K562 (cell line): ENCODE measurements at regions of chr4 and their contacts with region 1.

Region 1: GRCh38 chr4:158209825-158210807 is at the start of gene TMEM144:
- DNase-seq: peak; percentile 58 to 92 (median 74)
- ATAC-seq: peak; percentile 99
- H3K4me3 ChIP-seq: peak within 1 kb of the TSS; percentile 40
- H3K27ac ChIP-seq: peak within 1 kb of the TSS; percentile 86
- H3K4me1 ChIP-seq: peaks cover 4 to 8% of the 10 kb centered on the region in 2 experiments; a peak in 3 of 5 replicates
- H3K27me3 ChIP-seq: no peaks in the 10 kb centered on the region
- CTCF ChIP-seq: peak in 2 of 3 experiments; percentile 17 to 36; a peak in 2 of 6 replicates
- EP300 ChIP-seq: no peak
- POLR2A ChIP-seq: peak; percentile 84
- RAD21 ChIP-seq: 0 out of 4 replicates have a peak, but pooled peaks of 1 of the 2 experiments have one; percentile 12
- polyA plus RNA-seq, gene TMEM144: 5.9 to 6.0 TPM

Region 2: DNA sequence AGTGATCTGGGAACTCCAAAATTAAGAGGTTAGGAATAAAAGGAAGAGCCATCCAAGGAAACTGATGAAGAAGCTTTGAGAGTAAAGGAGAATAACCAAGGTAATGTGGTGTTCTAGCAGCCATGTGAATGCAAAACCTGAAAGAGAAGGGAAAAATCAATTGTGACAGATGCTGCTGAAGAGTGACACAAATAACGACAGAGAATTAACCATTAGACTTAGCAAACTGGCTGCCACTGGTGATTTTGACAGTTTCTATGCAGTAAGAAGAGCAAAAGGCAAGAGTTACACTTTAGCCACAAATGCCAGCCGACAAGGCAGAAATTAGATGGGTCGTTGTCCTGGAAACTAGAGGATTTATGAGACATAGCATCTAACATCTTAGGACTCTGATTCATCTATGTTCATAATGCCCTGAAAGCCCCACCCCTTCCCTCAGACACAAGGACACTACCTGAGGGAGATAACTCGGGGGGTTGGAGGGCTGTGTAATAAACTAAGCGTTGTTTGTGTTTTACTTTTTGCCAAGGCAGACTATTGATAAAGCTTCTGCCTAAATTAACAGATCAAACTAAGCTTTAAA is 12.8 kb before region 1 on chr4:
- CTCF ChIA-PET with region 1: no interaction called
- POLR2A ChIA-PET with region 1: no interaction called
- in situ Hi-C with region 1: no loop called
- intact Hi-C with region 1: no loop called
- DNase-seq: no peak
- ATAC-seq: no peak
- H3K4me3 ChIP-seq: no peak overlapping the region
- H3K27ac ChIP-seq: no peak overlapping the region
- H3K4me1 ChIP-seq: no peaks in the 10 kb centered on the region
- H3K27me3 ChIP-seq: no peaks in the 10 kb centered on the region
- CTCF ChIP-seq: no peak
- EP300 ChIP-seq: no peak
- POLR2A ChIP-seq: no peak
- RAD21 ChIP-seq: no peak

Region 3: DNA sequence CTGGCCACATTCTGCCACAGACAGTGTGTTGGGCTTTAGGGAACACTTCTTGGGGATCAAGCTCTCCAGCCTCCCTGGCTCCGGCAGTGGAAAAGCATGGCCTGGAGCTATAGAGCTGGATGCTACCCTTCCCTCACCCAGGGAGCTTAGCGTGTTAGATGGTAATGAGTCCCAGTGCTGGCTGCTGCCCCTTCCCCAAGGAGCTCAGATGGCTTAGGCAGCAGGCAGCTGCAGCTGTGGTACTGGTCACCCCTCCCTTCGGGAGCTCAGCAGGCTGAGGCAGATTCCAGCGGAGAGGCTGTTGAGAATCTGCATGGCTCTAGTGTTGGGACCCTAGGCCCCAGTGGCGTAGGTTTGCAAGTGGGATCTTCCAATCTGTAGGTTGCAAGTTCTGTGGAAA is 19.7 kb after region 1 on chr4:
- CTCF ChIA-PET with region 1: no interaction called
- POLR2A ChIA-PET with region 1: interaction called, 5 read pairs
- in situ Hi-C with region 1: no loop called
- intact Hi-C with region 1: loop called (anchors 2 kb)
- DNase-seq: no peak
- ATAC-seq: peak; percentile 41; the same call in 2 of the 3 replicates
- H3K4me3 ChIP-seq: no peak overlapping the region
- H3K27ac ChIP-seq: no peak overlapping the region; the same call in 2 of the 3 replicates
- H3K4me1 ChIP-seq: peaks cover 0 to 4% of the 10 kb centered on the region in 2 experiments; a peak in 2 of 5 replicates
- H3K27me3 ChIP-seq: no peaks in the 10 kb centered on the region
- CTCF ChIP-seq: no peak
- EP300 ChIP-seq: no peak
- POLR2A ChIP-seq: no peak
- RAD21 ChIP-seq: no peak

Region 4: DNA sequence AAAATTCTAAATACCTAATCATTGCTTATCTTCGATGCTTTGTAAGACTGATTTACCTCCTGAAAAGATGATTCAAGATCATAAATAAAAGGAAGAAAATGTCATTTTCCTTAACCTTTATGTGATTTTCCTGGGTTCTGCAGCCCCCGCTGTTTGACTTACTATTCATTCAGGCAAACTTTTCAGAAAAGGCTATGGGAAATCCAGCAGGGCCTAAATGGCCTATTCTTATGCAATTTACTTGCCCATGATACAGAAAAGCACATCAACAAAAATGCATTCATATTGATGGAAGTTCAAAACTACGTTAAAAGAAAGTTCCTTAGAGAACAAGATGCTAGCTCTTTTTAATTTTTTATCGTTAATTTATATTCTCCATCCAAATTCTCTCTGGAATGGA is 51.4 kb after region 1 on chr4:
- CTCF ChIA-PET with region 1: no interaction called
- POLR2A ChIA-PET with region 1: no interaction called
- in situ Hi-C with region 1: no loop called
- intact Hi-C with region 1: no loop called
- DNase-seq: no peak
- ATAC-seq: no peak
- H3K4me3 ChIP-seq: no peak overlapping the region
- H3K27ac ChIP-seq: no peak overlapping the region
- H3K4me1 ChIP-seq: no peaks in the 10 kb centered on the region
- H3K27me3 ChIP-seq: no peaks in the 10 kb centered on the region
- CTCF ChIP-seq: no peak
- EP300 ChIP-seq: no peak
- POLR2A ChIP-seq: no peak
- RAD21 ChIP-seq: no peak